ENCODE measurements at regions of chr17 and their contacts with region 1.

Region 1: DNA sequence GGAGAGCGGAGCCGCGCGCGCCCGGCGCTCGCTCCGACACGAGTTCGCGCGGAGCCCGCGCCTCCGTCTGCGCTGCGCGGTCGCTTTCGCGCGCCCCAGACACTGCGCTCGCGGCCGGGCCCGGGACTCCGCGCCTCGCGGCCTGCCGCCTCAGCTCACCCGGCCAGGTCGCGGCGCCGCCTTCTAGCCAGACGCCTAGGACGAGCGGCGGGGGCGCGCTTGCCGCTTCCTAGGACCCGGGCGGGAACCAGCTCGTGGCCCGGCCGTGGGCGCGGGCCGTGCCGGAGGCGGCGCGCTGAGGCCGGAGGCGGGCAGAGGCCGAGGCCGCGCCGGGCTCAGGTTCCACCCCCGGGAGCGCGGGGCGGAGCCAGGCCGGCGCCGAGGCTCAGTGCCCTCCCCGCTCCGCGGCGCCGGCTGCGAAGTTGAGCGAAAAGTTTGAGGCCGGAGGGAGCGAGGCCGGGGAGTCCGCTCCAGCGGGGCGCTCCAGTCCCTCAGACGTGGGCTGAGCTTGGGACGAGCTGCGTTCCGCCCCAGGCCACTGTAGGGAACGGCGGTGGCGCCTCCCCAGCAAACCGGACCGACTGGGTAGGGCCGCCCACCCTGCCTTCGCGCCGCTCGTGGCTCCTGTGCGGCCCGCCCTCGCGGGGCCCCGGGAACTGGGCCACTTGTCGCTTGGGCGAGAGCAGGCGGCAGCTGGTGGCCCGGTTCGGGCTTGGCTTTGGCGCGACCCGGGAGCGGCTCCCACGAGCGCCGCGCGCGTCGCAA is at the start of gene SPHK1:
- DNase-seq: peak; percentile 77
- H3K4me3 Mint-ChIP-seq: peak within 1 kb of the TSS; percentile 78
- H3K27ac Mint-ChIP-seq: peak within 1 kb of the TSS; percentile 85
- H3K4me1 Mint-ChIP-seq: peaks cover 8% of the 10 kb centered on the region
- H3K27me3 Mint-ChIP-seq: no peaks in the 10 kb centered on the region
- total RNA-seq, gene SPHK1: 9.9 to 11.4 TPM

Region 2: DNA sequence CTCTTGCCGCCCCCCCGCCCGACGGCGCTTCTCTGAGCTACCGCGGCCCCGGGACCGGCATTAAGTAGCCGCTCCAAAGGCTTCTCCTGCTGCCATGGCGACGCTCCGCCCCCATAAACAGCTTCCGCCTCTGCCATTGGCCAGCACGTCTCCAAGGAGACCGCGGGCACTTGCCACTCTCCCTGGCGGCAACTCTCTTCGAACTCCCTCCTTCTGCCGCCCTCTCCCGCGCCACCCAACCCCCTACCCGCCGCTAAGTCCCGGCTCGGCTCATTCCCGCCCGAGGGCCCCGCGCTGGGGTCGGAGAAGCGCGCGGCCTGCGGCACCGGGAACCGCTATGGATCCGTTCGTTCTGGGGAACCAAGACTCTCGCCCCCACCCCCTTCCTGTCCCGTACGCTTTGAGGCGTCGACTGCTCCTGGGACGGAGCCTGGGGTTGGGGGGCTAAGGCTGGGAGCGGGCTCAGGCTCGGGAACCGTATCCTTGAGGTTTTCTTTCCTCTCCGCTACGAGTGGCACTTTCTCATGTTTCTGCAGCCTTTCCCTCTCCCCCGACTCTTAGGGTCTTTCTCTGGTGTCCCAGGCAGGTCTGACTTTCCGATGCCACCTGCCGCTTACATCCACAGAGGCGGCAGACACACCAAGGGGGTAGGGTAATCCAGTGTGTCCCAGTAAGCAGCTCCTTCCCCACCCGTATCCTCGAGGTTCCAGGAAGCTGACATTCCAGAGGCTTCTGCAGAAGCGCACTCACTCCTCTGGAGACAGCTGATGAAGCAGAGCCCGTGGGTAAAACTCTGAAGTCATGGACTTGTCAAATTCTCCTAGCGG is 243.0 kb before region 1 on chr17 and contains the start of gene FOXJ1:
- CTCF ChIA-PET with region 1: no interaction called
- POLR2A ChIA-PET with region 1: no interaction called
- intact Hi-C with region 1: loop called (anchors 10 kb)
- DNase-seq: peak; percentile 95
- H3K4me3 Mint-ChIP-seq: peak within 1 kb of the TSS; percentile 67
- H3K27ac Mint-ChIP-seq: no peak within 1 kb of the TSS
- H3K4me1 Mint-ChIP-seq: peaks cover 55% of the 10 kb centered on the region
- H3K27me3 Mint-ChIP-seq: peaks cover 8% of the 10 kb centered on the region
- total RNA-seq, gene FOXJ1: 0.22 to 0.29 TPM

Region 3: GRCh38 chr17:76353599-76354316 is 30.6 kb before region 1 on chr17 and contains the start of gene PRPSAP1:
- CTCF ChIA-PET with region 1: interaction called, 97 read pairs
- POLR2A ChIA-PET with region 1: interaction called, 26 read pairs
- intact Hi-C with region 1: loop called (anchors 1 kb)
- DNase-seq: peak; percentile 88
- H3K4me3 Mint-ChIP-seq: peak within 1 kb of the TSS; percentile 96
- H3K27ac Mint-ChIP-seq: peak within 1 kb of the TSS; percentile 99
- H3K4me1 Mint-ChIP-seq: peaks cover 18% of the 10 kb centered on the region
- H3K27me3 Mint-ChIP-seq: no peaks in the 10 kb centered on the region
- total RNA-seq, gene PRPSAP1: 40.1 to 42.1 TPM

Region 4: DNA sequence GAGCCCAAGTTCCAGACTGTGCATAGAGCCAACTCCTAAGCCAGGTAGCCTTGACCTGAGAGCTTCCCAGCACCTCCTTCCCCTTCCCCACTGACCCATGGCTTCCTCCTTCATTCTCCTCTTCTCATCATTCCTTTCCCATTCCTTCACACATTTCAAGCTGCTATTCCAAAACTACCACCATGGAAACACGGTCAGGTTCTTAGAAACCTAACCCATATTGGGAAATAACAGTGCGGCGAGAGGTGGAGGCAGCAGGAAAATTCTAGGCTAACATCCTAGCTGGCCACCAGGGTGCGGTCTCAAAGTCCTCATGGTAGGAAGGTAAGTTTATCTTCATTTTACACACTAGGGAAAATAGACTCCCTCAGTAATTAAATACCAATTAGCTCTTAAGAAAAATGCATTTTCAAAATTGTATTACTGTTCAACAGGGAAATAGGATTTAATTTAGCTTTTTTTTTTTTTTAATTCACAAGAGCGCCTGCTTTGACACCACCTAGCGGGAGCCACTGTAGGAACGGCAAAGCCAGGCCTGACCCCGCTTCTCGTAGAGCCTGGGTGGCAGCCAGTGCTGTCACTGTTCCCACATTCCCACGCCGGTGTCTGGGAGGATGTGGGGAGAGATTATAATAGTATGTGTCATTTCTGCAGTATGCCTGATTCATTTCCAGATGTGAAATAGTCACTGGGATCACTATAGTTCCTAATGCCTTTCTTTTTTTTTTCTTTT is 14.0 kb before region 1 on chr17:
- CTCF ChIA-PET with region 1: interaction called, 18 read pairs
- POLR2A ChIA-PET with region 1: interaction called, 3 read pairs
- intact Hi-C with region 1: loop called (anchors 1 kb)
- DNase-seq: peak; percentile 27
- H3K4me3 Mint-ChIP-seq: no peak overlapping the region
- H3K27ac Mint-ChIP-seq: no peak overlapping the region
- H3K4me1 Mint-ChIP-seq: peaks cover 5% of the 10 kb centered on the region
- H3K27me3 Mint-ChIP-seq: no peaks in the 10 kb centered on the region

Region 5: GRCh38 chr17:76506408-76507349 is 122.3 kb after region 1 on chr17:
- CTCF ChIA-PET with region 1: interaction called, 10 read pairs
- POLR2A ChIA-PET with region 1: no interaction called
- intact Hi-C with region 1: no loop called
- DNase-seq: peak; percentile 93
- H3K4me3 Mint-ChIP-seq: no peak overlapping the region
- H3K27ac Mint-ChIP-seq: no peak overlapping the region
- H3K4me1 Mint-ChIP-seq: peaks cover 12% of the 10 kb centered on the region
- H3K27me3 Mint-ChIP-seq: no peaks in the 10 kb centered on the region

Measured in activated CD4-positive, alpha-beta memory T cell treated with anti-CD3 and anti-CD28 coated beads for 36 hours (primary cell).